Activated T-helper 1 cell treated with anti-CD3 and anti-CD28 coated beads, Interleukin-12 subunit alpha, Interleukin-12 subunit beta, Interleukin-2, Interleukin-4 antibody, amounts not matched to agents 30 ng/mL and 10 ng/mL and 1 ng/mL, durations not matched to agents 14 hours and 24 hours and 36 hours (primary cell): ENCODE measurements at regions of chr12 and their contacts with region 1.

Region 1: DNA sequence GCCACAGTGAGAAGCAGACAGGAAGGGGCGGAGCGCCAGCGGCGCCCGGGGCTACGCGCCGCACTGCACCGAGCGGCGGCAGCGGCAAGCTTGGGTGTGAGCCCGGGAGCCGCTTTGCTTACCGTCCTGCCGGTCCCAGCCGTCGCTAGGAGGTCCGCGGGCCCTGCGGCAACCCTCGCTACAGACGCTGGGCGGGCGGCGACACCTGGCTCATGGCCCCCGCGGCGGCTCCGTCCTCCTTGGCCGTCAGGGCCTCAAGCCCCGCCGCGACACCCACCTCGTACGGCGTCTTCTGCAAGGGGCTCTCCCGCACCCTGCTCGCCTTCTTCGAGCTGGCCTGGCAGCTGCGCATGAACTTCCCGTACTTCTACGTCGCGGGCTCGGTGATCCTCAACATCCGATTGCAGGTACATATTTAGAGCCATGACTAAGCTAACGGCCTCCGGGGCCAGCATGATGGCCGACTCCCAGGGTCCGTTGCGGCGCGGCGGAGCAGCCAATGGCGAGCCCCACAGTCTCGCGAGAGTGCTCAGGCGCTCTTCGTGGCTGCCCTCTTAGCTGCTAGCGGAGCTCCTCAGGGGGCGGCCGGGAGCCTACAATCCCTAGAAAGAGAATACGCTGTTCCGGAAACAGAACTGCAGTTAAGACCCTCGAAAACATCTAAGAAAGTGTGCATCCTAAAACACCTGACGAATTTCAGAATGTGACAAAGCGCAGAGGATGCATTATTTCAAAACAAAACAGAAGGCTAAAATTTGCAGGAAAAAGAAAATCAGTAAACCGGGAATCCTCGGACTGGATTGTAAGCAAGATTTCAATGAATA is at the start of gene SMIM10L1:
- DNase-seq: peak; percentile 86
- H3K4me3 Mint-ChIP-seq: peak within 1 kb of the TSS; percentile 99
- H3K27ac Mint-ChIP-seq: peak within 1 kb of the TSS; percentile 100
- H3K4me1 Mint-ChIP-seq: peaks cover 58% of the 10 kb centered on the region
- H3K27me3 Mint-ChIP-seq: no peaks in the 10 kb centered on the region
- total RNA-seq, gene SMIM10L1: 10.4 and 11.3 TPM in 2 replicates

Region 2: GRCh38 chr12:10749700-10750384 is 421.5 kb before region 1 on chr12:
- intact Hi-C with region 1: loop called (anchors 10 kb)
- DNase-seq: peak; percentile 66
- H3K4me3 Mint-ChIP-seq: peak overlapping the region; percentile 62
- H3K27ac Mint-ChIP-seq: peak overlapping the region; percentile 34
- H3K4me1 Mint-ChIP-seq: peaks cover 36% of the 10 kb centered on the region
- H3K27me3 Mint-ChIP-seq: peaks cover 24% of the 10 kb centered on the region

Region 3: GRCh38 chr12:10982244-10982643 is 189.1 kb before region 1 on chr12:
- intact Hi-C with region 1: loop called (anchors 1 kb)
- DNase-seq: peak; percentile 59
- H3K4me3 Mint-ChIP-seq: no peak overlapping the region
- H3K27ac Mint-ChIP-seq: no peak overlapping the region
- H3K4me1 Mint-ChIP-seq: peaks cover 18% of the 10 kb centered on the region
- H3K27me3 Mint-ChIP-seq: peaks cover 58% of the 10 kb centered on the region

Region 4: DNA sequence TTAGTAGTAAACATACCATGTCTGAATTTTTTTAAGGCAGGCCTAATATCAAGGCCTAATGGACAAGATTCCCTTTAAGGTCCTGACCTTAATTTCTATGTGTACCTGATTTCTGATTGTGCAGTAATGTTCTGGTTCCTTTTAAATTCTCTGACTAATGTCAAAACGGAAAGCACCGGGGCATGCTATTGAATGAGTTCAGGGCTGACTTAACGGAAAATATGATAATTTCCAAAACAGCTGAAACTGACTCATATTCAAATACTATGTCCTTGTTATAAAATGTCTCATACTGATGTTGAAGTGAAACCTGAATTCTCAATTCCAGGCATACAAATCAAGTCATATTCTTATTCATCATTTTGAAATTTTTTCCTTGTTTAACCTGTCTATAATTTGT is 85.9 kb before region 1 on chr12:
- intact Hi-C with region 1: loop called (anchors 1 kb)
- DNase-seq: no peak
- H3K4me3 Mint-ChIP-seq: no peak overlapping the region
- H3K27ac Mint-ChIP-seq: peak overlapping the region; percentile 34
- H3K4me1 Mint-ChIP-seq: peaks cover 7% of the 10 kb centered on the region
- H3K27me3 Mint-ChIP-seq: no peaks in the 10 kb centered on the region

Region 5: DNA sequence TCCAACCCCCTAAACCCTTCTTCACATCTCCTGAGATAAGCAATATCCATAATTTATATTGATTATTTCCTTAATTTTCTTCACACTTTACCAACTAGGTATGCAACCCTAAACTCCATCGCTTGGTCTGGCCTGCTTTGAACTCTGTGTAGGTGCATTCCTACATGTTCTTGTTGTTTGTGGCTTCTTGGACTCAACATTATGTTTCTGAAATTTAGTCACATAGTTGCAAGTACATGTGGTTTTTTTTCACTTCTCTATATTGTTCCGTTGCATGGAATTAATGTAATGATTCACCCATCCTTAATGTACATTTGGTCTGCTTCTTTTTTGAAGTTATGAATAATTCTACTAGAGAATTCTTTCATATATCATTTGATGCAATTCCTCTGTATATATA is 35.3 kb before region 1 on chr12:
- intact Hi-C with region 1: loop called (anchors 2 kb)
- DNase-seq: no peak
- H3K4me3 Mint-ChIP-seq: no peak overlapping the region
- H3K27ac Mint-ChIP-seq: peak overlapping the region; percentile 0
- H3K4me1 Mint-ChIP-seq: peaks cover 22% of the 10 kb centered on the region
- H3K27me3 Mint-ChIP-seq: no peaks in the 10 kb centered on the region

Region 6: GRCh38 chr12:11186837-11187236 is 15.5 kb after region 1 on chr12 and contains the start of gene TAS2R42:
- intact Hi-C with region 1: no loop called
- DNase-seq: no peak
- H3K4me3 Mint-ChIP-seq: no peak within 1 kb of the TSS
- H3K27ac Mint-ChIP-seq: no peak within 1 kb of the TSS
- H3K4me1 Mint-ChIP-seq: peaks cover 4% of the 10 kb centered on the region
- H3K27me3 Mint-ChIP-seq: peaks cover 17% of the 10 kb centered on the region
- total RNA-seq, gene TAS2R42: not detected in 2 replicates